GM12878 (cell line): ENCODE measurements at regions of chr20 and their contacts with region 1.

Region 1: GRCh38 chr20:57480444-57481160 is 44.3 kb downstream of the CTCFL start:
- DNase-seq: peak; percentile 83
- ATAC-seq: peak; percentile 59
- H3K4me3 ChIP-seq: peak overlapping the region; percentile 45
- H3K27ac ChIP-seq: peak overlapping the region; percentile 93
- H3K4me1 ChIP-seq: peaks cover 59% of the 10 kb centered on the region
- H3K27me3 ChIP-seq: no peaks in the 10 kb centered on the region
- CTCF ChIP-seq: no peak
- EP300 ChIP-seq: peak; percentile 69 to 74; a peak in 2 of 4 replicates
- POLR2A ChIP-seq: no peak; the same call in 1 of the 2 replicates
- RAD21 ChIP-seq: peak; percentile 1; the same call in 1 of the 2 replicates

Region 2: GRCh38 chr20:57412347-57413029 is 68.1 kb before region 1 on chr20:
- CTCF ChIA-PET with region 1: no interaction called
- POLR2A ChIA-PET with region 1: no interaction called
- RAD21 ChIA-PET with region 1: interaction called, 16 read pairs
- SMC1A ChIA-PET with region 1: interaction called, 6 read pairs
- in situ Hi-C with region 1: no loop called
- intact Hi-C with region 1: no loop called
- DNase-seq: no peak
- ATAC-seq: peak; percentile 79
- H3K4me3 ChIP-seq: no peak overlapping the region
- H3K27ac ChIP-seq: no peak overlapping the region
- H3K4me1 ChIP-seq: no peaks in the 10 kb centered on the region
- H3K27me3 ChIP-seq: no peaks in the 10 kb centered on the region
- CTCF ChIP-seq: no peak
- EP300 ChIP-seq: 0 out of 4 replicates have a peak, but pooled peaks of 1 of the 2 experiments have one; percentile 62
- POLR2A ChIP-seq: no peak
- RAD21 ChIP-seq: no peak

Region 3: DNA sequence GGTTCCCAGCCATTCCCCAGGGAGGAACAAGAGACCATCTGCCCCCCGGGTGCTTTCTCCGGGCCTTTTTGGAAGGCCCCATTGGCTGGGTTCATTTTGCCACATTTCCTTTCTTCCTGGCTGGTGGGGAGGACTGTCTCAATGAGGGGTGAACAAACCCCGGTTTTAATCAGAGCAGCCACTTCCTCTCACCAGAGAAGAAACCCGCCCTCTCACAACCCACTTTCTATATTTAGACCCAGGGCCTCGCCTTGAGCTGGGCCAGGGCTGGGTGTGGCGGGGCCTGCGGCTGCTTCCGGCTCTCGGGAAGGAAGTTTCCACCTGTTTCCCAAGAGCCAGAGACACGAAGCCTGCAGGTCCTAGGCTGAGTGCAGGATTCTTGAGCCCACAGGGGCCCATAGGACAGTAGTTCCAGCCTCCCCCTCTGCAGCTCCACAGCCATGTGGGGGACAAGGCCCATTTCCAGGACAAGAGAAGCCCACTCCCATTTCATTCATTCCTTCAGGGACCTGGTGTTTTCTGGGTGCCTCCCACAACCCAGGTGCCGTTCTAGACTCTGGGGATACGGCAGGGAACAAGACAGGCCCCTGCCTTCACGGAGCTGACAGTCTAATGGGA is 47.6 kb before region 1 on chr20:
- CTCF ChIA-PET with region 1: interaction called, 3 read pairs
- POLR2A ChIA-PET with region 1: interaction called, 20 read pairs
- RAD21 ChIA-PET with region 1: interaction called, 6 read pairs
- SMC1A ChIA-PET with region 1: interaction called, 6 read pairs
- in situ Hi-C with region 1: no loop called
- intact Hi-C with region 1: loop called (anchors 2 kb)
- DNase-seq: peak; percentile 76
- ATAC-seq: peak; percentile 94
- H3K4me3 ChIP-seq: 0 out of 2 replicates have a peak overlapping the region, but pooled peaks have one; percentile 26
- H3K27ac ChIP-seq: peak overlapping the region; percentile 57
- H3K4me1 ChIP-seq: peaks cover 39% of the 10 kb centered on the region
- H3K27me3 ChIP-seq: no peaks in the 10 kb centered on the region
- CTCF ChIP-seq: no peak
- EP300 ChIP-seq: peak; percentile 41 to 56; a peak in 2 of 4 replicates
- POLR2A ChIP-seq: no peak
- RAD21 ChIP-seq: no peak

Region 4: GRCh38 chr20:57493091-57493615 is 12.6 kb after region 1 on chr20:
- CTCF ChIA-PET with region 1: interaction called, 10 read pairs
- POLR2A ChIA-PET with region 1: interaction called, 4 read pairs
- RAD21 ChIA-PET with region 1: interaction called, 9 read pairs
- SMC1A ChIA-PET with region 1: interaction called, 12 read pairs
- in situ Hi-C with region 1: no loop called
- intact Hi-C with region 1: no loop called
- DNase-seq: no peak
- ATAC-seq: no peak
- H3K4me3 ChIP-seq: no peak overlapping the region
- H3K27ac ChIP-seq: no peak overlapping the region
- H3K4me1 ChIP-seq: no peaks in the 10 kb centered on the region
- H3K27me3 ChIP-seq: peaks cover 0 to 2% of the 10 kb centered on the region in 2 experiments; a peak in 1 of 4 replicates
- CTCF ChIP-seq: no peak
- EP300 ChIP-seq: no peak
- POLR2A ChIP-seq: no peak
- RAD21 ChIP-seq: no peak